ENCODE measurements at regions of chr7 and their contacts with region 1.

Region 1: GRCh38 chr7:99472561-99473243 is at the start of gene ZNF789:
- DNase-seq: peak; percentile 96
- ATAC-seq: peak; percentile 99
- H3K4me3 ChIP-seq: peak within 1 kb of the TSS; percentile 77 to 87 (median 83)
- H3K4me3 Mint-ChIP-seq: peak within 1 kb of the TSS; percentile 95
- H3K27ac ChIP-seq: peak within 1 kb of the TSS; percentile 59 to 82
- H3K27ac Mint-ChIP-seq: peak within 1 kb of the TSS; percentile 96
- H3K4me1 ChIP-seq: peaks cover 8 to 16% of the 10 kb centered on the region in 2 donors
- H3K4me1 Mint-ChIP-seq: peaks cover 30% of the 10 kb centered on the region
- H3K27me3 ChIP-seq: no peaks in the 10 kb centered on the region
- H3K27me3 Mint-ChIP-seq: no peaks in the 10 kb centered on the region
- CTCF ChIP-seq: peak; percentile 9
- total RNA-seq, gene ZNF789: 36.7 and 37.3 TPM in 2 replicates

Region 2: GRCh38 chr7:99551767-99552463 is 79.2 kb after region 1 on chr7 and contains the start of gene FAM200A:
- CTCF ChIA-PET with region 1: no interaction called
- POLR2A ChIA-PET with region 1: interaction called, 5 read pairs
- intact Hi-C with region 1: loop called (anchors 1 kb)
- DNase-seq: peak; percentile 92
- ATAC-seq: peak; percentile 97
- H3K4me3 ChIP-seq: peak within 1 kb of the TSS; percentile 76 to 99 (median 97)
- H3K4me3 Mint-ChIP-seq: peak within 1 kb of the TSS; percentile 88
- H3K27ac ChIP-seq: peak within 1 kb of the TSS; percentile 74 to 95
- H3K27ac Mint-ChIP-seq: peak within 1 kb of the TSS; percentile 86
- H3K4me1 ChIP-seq: peaks cover 17 to 22% of the 10 kb centered on the region in 2 donors
- H3K4me1 Mint-ChIP-seq: peaks cover 33% of the 10 kb centered on the region
- H3K27me3 ChIP-seq: no peaks in the 10 kb centered on the region
- H3K27me3 Mint-ChIP-seq: no peaks in the 10 kb centered on the region
- CTCF ChIP-seq: no peak
- total RNA-seq, gene FAM200A: 11.9 and 12.8 TPM in 2 replicates

Region 3: DNA sequence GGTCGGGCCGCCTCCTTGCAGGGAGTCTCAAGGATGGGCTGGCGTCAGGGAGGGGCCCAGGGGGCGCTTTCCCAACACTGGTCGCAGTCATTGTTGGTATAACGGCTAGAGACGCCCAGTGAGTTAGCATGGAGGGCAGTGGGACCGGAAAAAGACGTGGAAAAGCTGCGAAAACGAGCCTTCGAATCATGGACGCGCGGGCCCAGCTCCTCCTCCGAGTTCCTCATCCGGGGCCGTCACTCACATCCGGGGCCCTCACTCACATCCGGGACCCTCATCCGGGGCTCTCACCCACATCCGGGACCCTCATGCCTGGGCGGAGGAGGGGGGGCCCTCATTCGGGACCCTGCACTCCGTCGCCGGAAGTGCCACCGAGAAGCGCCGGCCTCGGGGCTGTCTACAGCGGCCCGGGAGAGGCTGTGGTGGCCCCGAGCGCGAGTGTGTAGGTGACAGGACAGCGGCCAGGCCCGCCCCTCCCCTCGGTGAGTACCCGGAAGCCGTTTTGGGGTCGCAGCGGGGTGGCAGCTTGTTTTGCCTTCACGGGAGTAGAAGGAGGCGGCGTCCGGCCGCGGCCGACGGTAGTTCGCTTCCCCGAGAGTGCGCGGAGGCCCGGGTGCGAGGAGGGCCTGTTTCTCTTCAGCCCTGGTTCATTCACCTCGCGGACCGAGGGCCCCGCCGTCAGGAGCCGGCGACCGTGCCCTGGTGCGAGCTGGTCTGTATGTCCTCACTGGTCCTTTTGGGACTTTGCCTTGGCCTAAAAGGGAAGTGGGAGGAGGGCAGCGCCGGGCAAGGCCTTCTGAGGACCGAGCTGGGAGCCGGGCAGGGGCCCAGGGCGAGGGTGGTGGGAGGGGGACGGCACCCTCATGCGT is 85.8 kb after region 1 on chr7 and contains the start of gene ZNF655:
- CTCF ChIA-PET with region 1: no interaction called
- POLR2A ChIA-PET with region 1: interaction called, 7 read pairs
- intact Hi-C with region 1: loop called (anchors 1 kb)
- DNase-seq: peak; percentile 94
- ATAC-seq: peak; percentile 80
- H3K4me3 ChIP-seq: peak within 1 kb of the TSS; percentile 77 to 97 (median 92)
- H3K4me3 Mint-ChIP-seq: peak within 1 kb of the TSS; percentile 98
- H3K27ac ChIP-seq: peak within 1 kb of the TSS; percentile 91 to 98
- H3K27ac Mint-ChIP-seq: peak within 1 kb of the TSS; percentile 98
- H3K4me1 ChIP-seq: peaks cover 19 to 25% of the 10 kb centered on the region in 2 donors
- H3K4me1 Mint-ChIP-seq: peaks cover 42% of the 10 kb centered on the region
- H3K27me3 ChIP-seq: no peaks in the 10 kb centered on the region
- H3K27me3 Mint-ChIP-seq: no peaks in the 10 kb centered on the region
- CTCF ChIP-seq: no peak
- total RNA-seq, gene ZNF655: 150 and 154 TPM in 2 replicates

Region 4: DNA sequence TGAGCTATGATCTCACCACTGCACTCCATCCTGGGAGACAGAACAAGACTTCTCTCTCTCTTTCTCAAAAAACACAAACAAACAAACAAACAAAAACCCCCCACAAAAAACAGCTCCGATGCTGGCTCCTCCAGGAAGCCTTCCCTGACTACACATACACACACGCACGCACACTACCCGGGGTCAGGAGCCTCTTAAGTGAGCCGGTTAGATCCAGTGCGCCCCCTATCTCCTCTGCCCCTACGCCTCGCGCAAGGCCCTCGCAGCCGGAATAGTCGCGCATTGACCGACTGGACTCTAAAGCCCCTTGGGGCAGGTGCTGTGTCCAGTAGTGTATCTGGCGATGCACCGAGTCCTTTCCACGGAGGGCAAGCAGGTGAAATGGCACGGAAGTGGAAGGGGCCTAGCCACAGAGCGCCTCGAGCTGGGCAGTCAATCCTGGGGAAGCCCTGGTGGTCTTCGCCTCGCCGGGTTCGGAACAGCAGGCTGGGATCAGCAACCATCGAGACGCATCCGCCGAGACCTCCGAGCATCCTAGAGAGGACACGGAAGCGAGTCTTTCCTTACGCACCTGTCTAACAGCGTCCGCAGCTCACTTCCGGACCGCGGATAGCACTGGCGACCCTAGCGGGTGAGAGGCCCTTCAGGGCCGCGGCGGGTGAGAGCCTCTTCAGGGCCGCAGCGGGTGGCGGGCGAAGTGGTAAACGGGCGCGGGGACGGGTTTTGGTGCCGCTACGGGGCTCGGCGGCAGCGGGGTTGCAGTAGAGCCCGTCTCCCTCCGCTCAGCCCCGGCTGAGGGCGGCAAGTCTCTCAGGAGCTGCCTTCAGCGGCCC is 143.9 kb after region 1 on chr7 and contains the start of gene ZSCAN25:
- CTCF ChIA-PET with region 1: no interaction called
- POLR2A ChIA-PET with region 1: no interaction called
- intact Hi-C with region 1: loop called (anchors 1 kb)
- DNase-seq: peak; percentile 91
- ATAC-seq: peak; percentile 95
- H3K4me3 ChIP-seq: peak within 1 kb of the TSS; percentile 86 to 99 (median 95)
- H3K4me3 Mint-ChIP-seq: peak within 1 kb of the TSS; percentile 98
- H3K27ac ChIP-seq: peak within 1 kb of the TSS; percentile 73 to 90
- H3K27ac Mint-ChIP-seq: peak within 1 kb of the TSS; percentile 95
- H3K4me1 ChIP-seq: peaks cover 17 to 18% of the 10 kb centered on the region in 2 donors
- H3K4me1 Mint-ChIP-seq: peaks cover 28% of the 10 kb centered on the region
- H3K27me3 ChIP-seq: no peaks in the 10 kb centered on the region
- H3K27me3 Mint-ChIP-seq: no peaks in the 10 kb centered on the region
- CTCF ChIP-seq: peak; percentile 7
- total RNA-seq, gene ZSCAN25: 37.1 and 39.5 TPM in 2 replicates